ENCODE measurements at regions of chr7 and their contacts with region 1.

Region 1: DNA sequence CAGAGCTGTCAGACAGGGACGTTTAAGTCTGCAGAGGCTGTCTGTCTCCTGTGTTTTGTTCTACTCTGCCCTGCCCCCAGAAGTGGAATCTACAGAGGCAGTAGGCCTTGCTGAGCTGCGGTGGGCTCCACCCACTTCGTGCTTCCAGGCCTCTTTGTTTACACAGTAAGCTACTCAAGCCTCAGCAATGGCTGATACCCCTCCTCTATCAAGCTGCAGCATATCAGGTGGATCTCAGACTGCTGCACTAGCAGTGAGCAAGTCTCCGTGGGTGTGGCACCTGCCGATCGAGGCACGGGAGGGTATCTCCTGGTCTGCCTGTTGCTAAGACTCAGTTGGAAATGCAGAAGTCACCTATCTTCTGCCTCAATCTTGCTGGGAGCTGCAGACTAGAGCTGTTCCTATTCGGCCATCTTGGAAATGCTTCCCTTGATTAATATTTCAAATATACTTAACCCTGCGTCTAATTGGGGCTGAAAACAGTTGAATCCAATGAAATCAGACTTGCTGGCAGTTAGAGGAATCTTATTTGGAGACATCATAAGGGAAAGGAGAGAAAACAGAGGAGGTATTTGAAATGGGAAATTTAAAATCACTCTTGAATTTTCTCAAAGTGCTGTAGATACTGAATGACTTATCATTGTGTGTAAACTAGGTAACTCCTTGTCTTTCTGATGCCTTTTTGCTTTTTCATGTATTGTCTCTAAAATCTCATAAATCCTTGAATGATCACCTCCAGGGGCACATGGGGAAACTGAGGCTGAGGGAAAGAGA is 13.8 kb upstream of the CYP3A5 start:
- DNase-seq: peak in 7 of 9 donors; percentile 49 to 78 (median 59)
- ATAC-seq: peak; percentile 74
- H3K4me3 ChIP-seq: no peak overlapping the region
- H3K4me3 Mint-ChIP-seq: peak overlapping the region in 8 of 10 donors; percentile 1 to 66 (median 48)
- H3K27ac ChIP-seq: peak overlapping the region; percentile 0
- H3K27ac Mint-ChIP-seq: peak overlapping the region in 8 of 9 donors; percentile 61 to 92 (median 80)
- H3K4me1 ChIP-seq: no peaks in the 10 kb centered on the region
- H3K4me1 Mint-ChIP-seq: peaks cover 0 to 22% (median 21%) of the 10 kb centered on the region in 7 donors
- H3K27me3 ChIP-seq: no peaks in the 10 kb centered on the region
- H3K27me3 Mint-ChIP-seq: peaks cover 0 to 5% (median 0%) of the 10 kb centered on the region in 5 donors

Region 2: DNA sequence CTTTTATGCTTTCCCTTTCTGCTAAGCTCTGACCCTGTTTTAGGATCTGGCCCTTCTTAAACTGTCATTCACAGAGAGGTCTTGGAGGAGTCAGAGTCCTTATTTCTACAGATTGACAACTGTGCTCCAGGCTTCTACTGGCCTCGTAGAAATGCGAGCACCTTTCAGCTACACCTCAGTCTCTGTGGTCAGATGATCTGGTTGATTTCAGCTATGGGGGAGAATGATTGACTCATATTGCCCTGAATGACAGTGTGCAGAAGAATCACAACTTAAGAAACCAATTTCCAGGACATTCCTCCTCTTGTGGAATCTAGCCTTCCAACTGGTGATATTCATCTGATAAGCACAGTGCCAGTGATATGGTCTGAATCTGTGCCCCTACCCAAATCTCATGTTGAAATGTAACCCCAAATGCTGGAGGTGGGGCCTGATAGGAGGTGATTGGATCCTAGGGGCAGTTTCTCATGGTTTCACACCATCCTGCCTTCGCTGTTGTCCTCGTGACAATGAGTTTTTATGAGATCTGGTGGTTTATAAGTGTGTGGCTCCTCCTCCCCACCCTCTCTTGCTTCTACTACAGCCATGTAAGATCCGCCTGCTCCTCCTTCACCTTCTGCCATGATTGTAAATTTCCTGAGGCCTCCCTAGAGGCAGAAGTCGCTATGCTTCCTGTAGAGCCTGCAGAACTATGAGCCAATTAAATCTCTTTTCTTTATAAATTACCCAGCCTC is 55.4 kb after region 1 on chr7:
- CTCF ChIA-PET with region 1: no interaction called
- POLR2A ChIA-PET with region 1: no interaction called
- intact Hi-C with region 1: loop called in 1 of 2 experiments (anchors 2 kb)
- DNase-seq: no peak
- ATAC-seq: no peak
- H3K4me3 ChIP-seq: no peak overlapping the region
- H3K4me3 Mint-ChIP-seq: no peak overlapping the region
- H3K27ac ChIP-seq: no peak overlapping the region
- H3K27ac Mint-ChIP-seq: no peak overlapping the region
- H3K4me1 ChIP-seq: no peaks in the 10 kb centered on the region
- H3K4me1 Mint-ChIP-seq: no peaks in the 10 kb centered on the region
- H3K27me3 ChIP-seq: no peaks in the 10 kb centered on the region
- H3K27me3 Mint-ChIP-seq: peaks cover 0 to 12% (median 6%) of the 10 kb centered on the region in 5 donors

Measured in naive thymus-derived CD4-positive, alpha-beta T cell (primary cell).